A673 (cell line): ENCODE measurements at regions of chr1 and their contacts with region 1.

Region 1: GRCh38 chr1:147124266-147124665 is 48.0 kb downstream of the PRKAB2 start:
- DNase-seq: no peak
- H3K4me3 ChIP-seq: no peak overlapping the region
- H3K27ac ChIP-seq: no peak overlapping the region
- H3K4me1 ChIP-seq: no peaks in the 10 kb centered on the region
- H3K27me3 ChIP-seq: no peaks in the 10 kb centered on the region
- CTCF ChIP-seq: no peak

Region 2: DNA sequence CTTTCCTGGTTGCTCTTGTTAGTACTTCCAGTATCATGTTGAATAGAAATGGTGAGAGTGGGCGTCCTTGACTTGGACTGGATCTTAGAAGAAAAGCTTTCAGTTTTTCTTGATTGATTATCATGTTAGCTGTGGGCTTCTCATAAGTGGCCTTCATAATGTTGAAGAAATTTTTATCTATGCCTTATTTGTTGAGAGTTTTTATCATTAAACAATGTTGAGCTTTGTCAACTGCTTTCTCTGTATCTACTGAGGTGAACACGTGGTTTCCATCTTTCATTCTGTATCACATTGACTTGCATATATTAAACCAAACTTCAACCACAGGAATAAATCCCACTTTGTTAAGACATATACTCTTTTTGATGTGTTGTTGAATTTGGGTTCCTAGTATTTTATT is 18.6 kb after region 1 on chr1:
- CTCF ChIA-PET with region 1: no interaction called
- POLR2A ChIA-PET with region 1: no interaction called
- intact Hi-C with region 1: loop called (anchors 2 kb)
- DNase-seq: no peak
- H3K4me3 ChIP-seq: no peak overlapping the region
- H3K27ac ChIP-seq: no peak overlapping the region
- H3K4me1 ChIP-seq: no peaks in the 10 kb centered on the region
- H3K27me3 ChIP-seq: peaks cover 28% of the 10 kb centered on the region
- CTCF ChIP-seq: no peak

Region 3: GRCh38 chr1:147172168-147172992 is 48.1 kb after region 1 on chr1 and contains the start of gene PRKAB2:
- CTCF ChIA-PET with region 1: no interaction called
- POLR2A ChIA-PET with region 1: no interaction called
- intact Hi-C with region 1: no loop called
- DNase-seq: peak; percentile 97
- H3K4me3 ChIP-seq: peak within 1 kb of the TSS; percentile 70
- H3K27ac ChIP-seq: peak within 1 kb of the TSS; percentile 64
- H3K4me1 ChIP-seq: peaks cover 17% of the 10 kb centered on the region
- H3K27me3 ChIP-seq: no peaks in the 10 kb centered on the region
- CTCF ChIP-seq: peak; percentile 82
- total RNA-seq, gene PRKAB2: 14.4 and 15.0 TPM in 2 replicates